Pancreas (tissue), 10 donors: ENCODE measurements at regions of chr12 and their contacts with region 1.

Region 1: DNA sequence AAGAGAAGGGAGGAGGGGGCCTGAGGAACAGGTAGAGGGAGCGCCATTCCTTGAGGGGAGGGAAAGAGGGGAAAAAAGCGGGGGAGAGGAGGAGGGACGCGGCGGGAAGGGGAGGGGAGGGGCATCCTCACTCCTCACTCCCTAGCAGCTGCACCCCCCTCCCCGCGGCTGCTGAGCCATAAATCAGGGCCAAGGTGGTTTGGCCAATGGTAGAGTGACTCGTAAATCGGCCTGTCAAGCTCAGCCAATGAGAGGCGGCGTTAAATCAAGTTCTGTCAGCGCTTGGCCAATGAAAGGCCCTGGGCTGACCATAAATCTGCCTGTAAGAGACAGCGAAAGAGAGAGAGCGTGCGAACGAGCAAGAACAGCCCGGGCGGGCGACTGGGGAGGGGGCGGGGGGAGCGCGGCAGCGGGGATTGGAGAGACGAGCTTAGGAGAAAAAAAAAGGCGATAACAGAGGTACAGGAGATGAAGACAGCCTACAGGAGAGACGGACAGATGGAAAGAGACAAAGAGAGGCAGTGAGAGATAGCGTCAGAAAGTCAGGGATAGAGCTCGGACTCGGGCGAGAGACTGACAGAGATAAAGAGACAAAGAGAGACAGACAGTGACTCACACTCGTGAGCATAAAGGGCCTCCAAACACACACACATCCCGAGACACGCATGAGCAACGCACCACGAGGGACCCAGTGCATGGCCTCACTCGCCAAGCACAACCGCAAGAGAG is 5.1 kb downstream of the GPR84 start:
- DNase-seq: peak; percentile 86 to 98 (median 96)
- ATAC-seq: peak; percentile 89 to 93 (median 93)
- H3K4me3 ChIP-seq: peak overlapping the region; percentile 17 to 57 (median 36)
- H3K27ac ChIP-seq: peak overlapping the region; percentile 28 to 87 (median 64)
- H3K4me1 ChIP-seq: peaks cover 0 to 15% (median 3%) of the 10 kb centered on the region in 3 donors
- H3K27me3 ChIP-seq: no peaks in the 10 kb centered on the region
- CTCF ChIP-seq: no peak

Region 2: GRCh38 chr12:54214553-54215406 is 144.4 kb before region 1 on chr12:
- intact Hi-C with region 1: loop called in 2 of 3 experiments (anchors 5 kb)
- DNase-seq: peak; percentile 71 to 90 (median 83)
- ATAC-seq: peak; percentile 78 to 92 (median 90)
- H3K4me3 ChIP-seq: no peak overlapping the region
- H3K27ac ChIP-seq: no peak overlapping the region
- H3K4me1 ChIP-seq: peaks cover 0 to 9% (median 0%) of the 10 kb centered on the region in 3 donors
- H3K27me3 ChIP-seq: peaks cover 0 to 36% (median 3%) of the 10 kb centered on the region in 4 donors
- CTCF ChIP-seq: peak; percentile 92 to 96 (median 96)

Region 3: GRCh38 chr12:54294152-54294952 is 64.8 kb before region 1 on chr12:
- intact Hi-C with region 1: loop called in 1 of 3 experiments (anchors 5 kb)
- DNase-seq: peak in 5 of 6 donors; percentile 49 to 84 (median 76)
- ATAC-seq: peak; percentile 76 to 93 (median 88)
- H3K4me3 ChIP-seq: no peak overlapping the region
- H3K27ac ChIP-seq: no peak overlapping the region
- H3K4me1 ChIP-seq: no peaks in the 10 kb centered on the region
- H3K27me3 ChIP-seq: no peaks in the 10 kb centered on the region
- CTCF ChIP-seq: peak; percentile 26 to 61 (median 46)

Region 4: GRCh38 chr12:54300732-54301427 is 58.3 kb before region 1 on chr12 and contains the start of gene NFE2:
- intact Hi-C with region 1: loop called in 1 of 3 experiments (anchors 10 kb)
- DNase-seq: peak; percentile 41 to 83 (median 58)
- ATAC-seq: peak; percentile 65 to 87 (median 83)
- H3K4me3 ChIP-seq: peak within 1 kb of the TSS in 3 of 4 donors; percentile 17 to 40 (median 19)
- H3K27ac ChIP-seq: no peak within 1 kb of the TSS
- H3K4me1 ChIP-seq: peaks cover 0 to 6% (median 0%) of the 10 kb centered on the region in 3 donors
- H3K27me3 ChIP-seq: no peaks in the 10 kb centered on the region
- CTCF ChIP-seq: no peak
- total RNA-seq, gene NFE2: 0.16 to 0.58 (median 0.47) TPM in 5 of 6 donors, not detected in the other

Region 5: DNA sequence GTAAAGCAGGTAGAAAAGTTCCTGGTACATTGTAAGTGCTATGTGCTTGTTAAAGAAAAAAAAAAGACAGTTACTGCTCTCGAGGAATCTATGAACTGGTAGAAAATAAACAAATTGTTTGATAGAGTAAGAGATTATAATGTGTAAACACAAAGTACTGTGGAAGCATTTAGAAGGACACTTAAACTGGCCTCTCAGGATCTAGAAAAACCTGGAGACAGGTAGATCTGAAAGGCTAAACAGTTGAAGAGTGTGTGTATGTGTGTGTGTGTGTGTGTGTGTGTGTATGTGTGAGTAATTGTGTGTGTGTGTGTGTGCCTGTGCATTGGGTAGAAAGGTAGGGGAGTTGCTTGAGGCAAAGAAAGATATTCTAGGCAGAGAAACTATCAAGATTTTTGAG is 153.3 kb after region 1 on chr12:
- intact Hi-C with region 1: no loop called
- DNase-seq: no peak
- ATAC-seq: no peak
- H3K4me3 ChIP-seq: no peak overlapping the region
- H3K27ac ChIP-seq: no peak overlapping the region
- H3K4me1 ChIP-seq: no peaks in the 10 kb centered on the region
- H3K27me3 ChIP-seq: no peaks in the 10 kb centered on the region
- CTCF ChIP-seq: no peak